Uterus (tissue), 4 donors: ENCODE measurements at regions of chr20 and their contacts with region 1.

Region 1: DNA sequence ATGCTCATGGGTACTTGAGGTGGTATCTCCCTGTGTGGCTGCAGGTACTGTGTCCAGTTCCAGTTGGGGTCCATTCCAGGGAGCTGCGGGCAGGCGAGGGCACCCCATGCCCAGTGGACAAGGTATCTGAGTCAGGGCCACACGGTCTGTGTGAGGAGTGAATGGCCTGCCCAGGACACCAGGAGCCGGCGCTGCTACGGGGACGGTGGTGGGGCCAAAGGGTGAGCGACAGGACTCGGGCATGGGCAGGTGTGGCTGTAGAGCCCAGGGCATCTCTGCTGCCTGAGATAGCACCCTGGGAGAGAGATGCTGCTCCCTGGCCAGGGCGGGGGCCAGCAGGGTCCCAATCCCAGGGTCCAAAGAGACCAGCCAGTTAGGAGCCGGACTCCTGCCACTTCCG is 57.6 kb upstream of the ZNFX1 start:
- DNase-seq: no peak
- H3K4me3 ChIP-seq: no peak overlapping the region
- H3K27ac ChIP-seq: no peak overlapping the region
- H3K4me1 ChIP-seq: no peaks in the 10 kb centered on the region
- H3K27me3 ChIP-seq: no peaks in the 10 kb centered on the region
- CTCF ChIP-seq: no peak
- POLR2A ChIP-seq: no peak

Region 2: DNA sequence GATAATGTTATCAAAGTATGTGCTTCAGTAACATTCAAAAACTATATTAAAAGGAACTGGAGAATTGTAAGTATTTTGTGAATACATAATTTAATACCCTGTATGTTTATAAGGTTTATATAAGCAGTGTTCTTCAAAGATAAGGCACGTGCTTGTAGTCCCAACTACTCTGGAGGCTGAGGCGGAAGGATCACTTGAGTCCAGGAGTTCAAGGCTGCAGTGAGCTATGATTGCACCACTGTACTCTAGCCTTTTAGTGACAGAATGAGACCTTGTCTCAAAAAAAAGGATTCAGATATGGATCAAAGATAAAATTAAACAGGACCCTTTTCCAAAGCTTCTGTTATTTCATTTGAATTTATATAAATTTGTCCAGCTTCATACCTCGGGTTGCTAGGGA is 272.2 kb before region 1 on chr20:
- intact Hi-C with region 1: no loop called
- DNase-seq: no peak
- H3K4me3 ChIP-seq: no peak overlapping the region
- H3K27ac ChIP-seq: no peak overlapping the region
- H3K4me1 ChIP-seq: no peaks in the 10 kb centered on the region
- H3K27me3 ChIP-seq: no peaks in the 10 kb centered on the region
- CTCF ChIP-seq: no peak
- POLR2A ChIP-seq: no peak

Region 3: GRCh38 chr20:49484180-49485140 is 149.0 kb after region 1 on chr20:
- intact Hi-C with region 1: loop called (anchors 2 kb)
- DNase-seq: peak; percentile 79 to 83
- H3K4me3 ChIP-seq: peak overlapping the region; percentile 26 to 38
- H3K27ac ChIP-seq: peak overlapping the region in 1 of 2 donors; percentile 84
- H3K4me1 ChIP-seq: peaks cover 0 to 3% of the 10 kb centered on the region in 2 donors
- H3K27me3 ChIP-seq: no peaks in the 10 kb centered on the region
- CTCF ChIP-seq: peak; percentile 77 to 94 (median 85)
- POLR2A ChIP-seq: no peak

Region 4: DNA sequence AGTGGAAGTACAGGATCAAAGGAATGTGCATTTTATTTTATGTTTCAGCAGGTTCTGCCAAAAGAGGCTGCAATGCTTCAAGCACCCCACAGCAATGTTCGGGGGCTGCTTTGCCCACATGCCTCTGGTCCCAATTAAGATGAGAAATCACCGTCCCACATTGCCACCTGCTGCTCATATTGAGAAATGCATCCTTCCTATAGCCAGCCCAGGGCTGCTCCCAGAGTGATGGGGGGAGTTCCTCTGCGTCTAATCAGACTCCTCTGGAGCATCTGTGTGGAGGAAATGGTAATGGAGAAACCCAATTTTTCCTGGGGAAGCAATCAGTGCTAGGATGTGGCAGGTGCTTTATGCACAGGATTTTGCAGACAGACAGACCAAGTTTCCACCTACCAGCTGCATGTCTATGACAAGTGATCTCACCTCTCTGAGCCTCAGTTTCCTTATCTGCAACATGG is 198.8 kb after region 1 on chr20:
- intact Hi-C with region 1: loop called (anchors 5 kb)
- DNase-seq: peak; percentile 54 to 65
- H3K4me3 ChIP-seq: no peak overlapping the region
- H3K27ac ChIP-seq: no peak overlapping the region
- H3K4me1 ChIP-seq: no peaks in the 10 kb centered on the region
- H3K27me3 ChIP-seq: no peaks in the 10 kb centered on the region
- CTCF ChIP-seq: peak; percentile 62 to 75 (median 74)
- POLR2A ChIP-seq: no peak